Activated CD4-positive, alpha-beta memory T cell treated with anti-CD3 and anti-CD28 coated beads, Interleukin-2, amount 10 ng/mL, durations not matched to agents 7 days and 5 days (primary cell): ENCODE measurements at regions of chr18 and their contacts with region 1.

Region 1: DNA sequence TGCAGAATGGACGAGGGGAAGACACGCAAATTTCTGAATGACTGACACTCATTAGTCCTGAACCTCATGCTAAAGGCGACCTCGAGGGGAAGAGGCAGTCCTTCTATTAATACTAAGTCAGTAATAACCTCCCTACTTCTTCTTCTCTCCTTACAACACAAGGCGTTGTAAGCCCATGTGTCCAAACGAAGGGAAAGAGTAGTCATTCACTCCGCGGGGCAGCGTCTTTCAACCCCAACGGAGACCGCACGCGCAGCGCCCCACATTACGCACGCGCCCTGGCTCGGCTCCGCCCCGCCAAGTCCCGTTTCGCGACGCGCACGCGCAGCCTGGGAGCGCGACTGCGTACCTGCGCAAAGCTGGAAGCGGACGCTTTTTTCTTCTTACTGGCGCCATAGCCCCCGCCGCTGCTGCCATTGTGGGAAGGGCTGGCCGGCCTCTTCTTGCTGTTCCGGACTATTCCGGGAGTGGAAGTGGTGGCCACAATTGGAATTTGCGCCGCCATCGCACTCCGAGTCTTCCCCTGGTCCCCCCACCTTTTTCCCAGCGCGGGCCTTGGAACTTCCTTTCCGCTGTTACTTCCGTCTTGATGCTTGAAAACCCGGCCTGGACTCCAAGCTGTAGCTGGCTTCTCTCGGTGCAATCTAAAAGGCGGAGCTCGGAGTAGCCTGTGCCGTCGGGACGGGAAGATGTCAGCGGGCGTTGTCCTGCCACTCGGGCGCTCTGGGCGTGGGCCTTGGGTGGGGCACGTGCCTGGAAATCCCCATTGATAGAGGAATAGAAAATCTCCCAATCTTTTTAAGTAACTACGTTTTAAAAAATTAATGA is at the start of gene INO80C:
- DNase-seq: peak; percentile 92
- H3K4me3 Mint-ChIP-seq: peak within 1 kb of the TSS; percentile 87
- H3K27ac Mint-ChIP-seq: peak within 1 kb of the TSS; percentile 91
- H3K4me1 Mint-ChIP-seq: peaks cover 29% of the 10 kb centered on the region
- H3K27me3 Mint-ChIP-seq: no peaks in the 10 kb centered on the region
- total RNA-seq, gene INO80C: 18.4 to 18.8 TPM

Region 2: DNA sequence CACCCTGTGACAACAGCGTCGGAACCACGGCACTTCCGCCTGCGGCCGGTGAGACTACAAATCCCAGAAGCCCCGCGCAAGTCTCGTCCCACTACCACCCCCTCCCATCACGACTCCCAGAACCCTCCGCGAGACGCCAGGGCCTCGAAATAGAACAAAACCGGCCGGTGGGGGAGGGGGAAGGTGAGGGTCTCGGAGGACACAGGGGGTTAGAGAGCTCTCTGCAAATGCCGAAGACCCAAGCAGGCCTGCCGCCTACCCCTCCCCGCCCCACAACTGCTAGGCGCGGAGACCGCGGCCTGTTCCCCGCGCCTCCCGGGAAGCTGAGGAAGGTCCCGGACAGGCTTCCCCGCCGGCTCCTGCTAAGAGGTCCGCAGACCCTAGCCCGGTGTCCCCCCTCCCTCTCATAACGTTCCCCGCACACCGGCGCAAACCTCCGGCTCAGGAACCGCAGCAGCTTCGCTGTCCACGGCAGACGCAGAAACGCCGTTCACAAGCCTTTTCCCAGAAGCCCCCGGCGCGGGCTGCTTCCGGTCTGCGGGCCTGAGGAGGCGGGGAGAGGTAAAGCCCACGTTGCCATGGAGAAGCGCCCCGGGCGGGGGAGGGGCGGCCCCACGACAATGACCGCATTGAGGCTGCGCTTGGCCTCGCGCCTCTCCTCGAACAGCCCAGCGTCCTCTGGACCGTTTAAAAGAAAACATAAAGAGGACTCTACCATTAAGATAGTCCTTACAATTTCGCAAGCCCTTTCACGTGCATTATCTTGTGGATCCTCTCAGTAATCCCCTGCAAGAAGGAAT is 153.4 kb before region 1 on chr18 and contains the start of gene ZNF24:
- CTCF ChIA-PET with region 1: no interaction called
- POLR2A ChIA-PET with region 1: interaction called, 16 read pairs
- DNase-seq: peak; percentile 92
- H3K4me3 Mint-ChIP-seq: peak within 1 kb of the TSS; percentile 100
- H3K27ac Mint-ChIP-seq: peak within 1 kb of the TSS; percentile 92
- H3K4me1 Mint-ChIP-seq: peaks cover 33% of the 10 kb centered on the region
- H3K27me3 Mint-ChIP-seq: no peaks in the 10 kb centered on the region
- total RNA-seq, gene ZNF24: 53.9 to 55.2 TPM

Region 3: DNA sequence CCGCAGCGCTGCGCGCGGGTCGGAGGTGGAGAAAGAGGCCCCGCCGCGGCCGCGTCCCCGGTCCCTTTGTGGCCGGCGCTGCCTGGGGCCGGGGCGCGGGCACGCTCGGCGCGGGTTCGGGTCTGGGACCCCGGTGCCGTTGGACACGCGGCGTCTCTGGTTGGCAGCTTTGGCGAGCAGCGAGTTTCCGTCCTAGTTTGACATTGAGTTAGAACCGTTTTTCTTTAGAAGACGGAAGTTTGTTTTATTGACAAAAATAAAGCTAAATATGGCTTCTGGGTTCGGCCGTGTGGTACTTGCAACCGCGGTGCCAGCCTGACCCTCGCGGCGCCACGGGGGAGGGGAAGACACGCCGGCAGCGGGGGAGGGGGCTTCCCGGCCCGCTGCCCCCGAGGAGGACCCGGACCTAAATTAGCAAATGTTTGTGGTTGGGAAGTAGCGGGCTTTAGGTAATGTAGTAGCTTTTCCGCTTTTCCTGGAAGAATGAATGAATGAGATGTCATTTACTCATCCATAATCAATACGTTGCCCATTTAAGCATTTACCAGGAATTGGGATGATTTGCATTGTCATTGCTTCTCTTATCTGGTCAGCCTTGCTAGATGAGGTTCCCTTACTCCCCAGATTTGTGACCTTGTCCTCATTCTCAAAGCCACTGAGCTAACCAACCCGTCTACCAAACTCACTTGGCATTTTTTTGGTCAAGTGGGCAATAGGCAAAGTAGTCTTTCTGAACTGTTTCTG is 84.5 kb after region 1 on chr18:
- CTCF ChIA-PET with region 1: no interaction called
- POLR2A ChIA-PET with region 1: interaction called, 18 read pairs
- DNase-seq: peak; percentile 33
- H3K4me3 Mint-ChIP-seq: peak overlapping the region; percentile 69
- H3K27ac Mint-ChIP-seq: peak overlapping the region; percentile 32
- H3K4me1 Mint-ChIP-seq: peaks cover 33% of the 10 kb centered on the region
- H3K27me3 Mint-ChIP-seq: peaks cover 16% of the 10 kb centered on the region

Region 4: GRCh38 chr18:35972197-35973052 is 474.8 kb after region 1 on chr18 and contains the start of gene RMP24:
- CTCF ChIA-PET with region 1: no interaction called
- POLR2A ChIA-PET with region 1: interaction called, 10 read pairs
- DNase-seq: peak; percentile 95
- H3K4me3 Mint-ChIP-seq: peak within 1 kb of the TSS; percentile 94
- H3K27ac Mint-ChIP-seq: peak within 1 kb of the TSS; percentile 94
- H3K4me1 Mint-ChIP-seq: peaks cover 49% of the 10 kb centered on the region
- H3K27me3 Mint-ChIP-seq: no peaks in the 10 kb centered on the region